Astrocyte of the cerebellum (primary cell): ENCODE measurements at regions of chr7 and their contacts with region 1.

Region 1: DNA sequence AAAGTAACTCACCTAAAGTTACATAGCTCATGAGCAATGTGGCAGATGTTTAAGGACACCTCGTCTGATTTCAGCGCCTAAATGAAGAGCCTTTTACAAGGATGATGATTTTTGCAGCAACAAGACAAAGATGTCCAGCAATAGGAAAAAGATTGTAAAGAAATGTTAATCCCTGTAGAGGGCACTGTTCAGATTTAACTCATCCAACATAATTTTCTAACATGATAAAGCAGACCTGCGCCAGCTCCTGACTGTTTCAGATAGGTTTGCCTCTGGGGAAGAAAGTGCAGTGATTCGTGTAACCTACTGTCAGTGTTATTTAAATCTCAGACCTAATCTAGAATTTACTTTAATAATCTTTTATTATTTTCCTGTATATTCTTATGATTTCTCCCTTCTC is 595.2 kb downstream of the AUTS2 start:
- DNase-seq: no peak
- H3K4me3 ChIP-seq: no peak overlapping the region
- CTCF ChIP-seq: peak; percentile 42

Region 2: GRCh38 chr7:70241536-70242175 is 48.1 kb after region 1 on chr7:
- in situ Hi-C with region 1: loop called (anchors 5 kb)
- DNase-seq: no peak
- H3K4me3 ChIP-seq: no peak overlapping the region
- CTCF ChIP-seq: no peak

Region 3: GRCh38 chr7:70259502-70259901 is 66.0 kb after region 1 on chr7:
- in situ Hi-C with region 1: no loop called
- DNase-seq: peak; percentile 19
- H3K4me3 ChIP-seq: no peak overlapping the region
- CTCF ChIP-seq: no peak

Region 4: DNA sequence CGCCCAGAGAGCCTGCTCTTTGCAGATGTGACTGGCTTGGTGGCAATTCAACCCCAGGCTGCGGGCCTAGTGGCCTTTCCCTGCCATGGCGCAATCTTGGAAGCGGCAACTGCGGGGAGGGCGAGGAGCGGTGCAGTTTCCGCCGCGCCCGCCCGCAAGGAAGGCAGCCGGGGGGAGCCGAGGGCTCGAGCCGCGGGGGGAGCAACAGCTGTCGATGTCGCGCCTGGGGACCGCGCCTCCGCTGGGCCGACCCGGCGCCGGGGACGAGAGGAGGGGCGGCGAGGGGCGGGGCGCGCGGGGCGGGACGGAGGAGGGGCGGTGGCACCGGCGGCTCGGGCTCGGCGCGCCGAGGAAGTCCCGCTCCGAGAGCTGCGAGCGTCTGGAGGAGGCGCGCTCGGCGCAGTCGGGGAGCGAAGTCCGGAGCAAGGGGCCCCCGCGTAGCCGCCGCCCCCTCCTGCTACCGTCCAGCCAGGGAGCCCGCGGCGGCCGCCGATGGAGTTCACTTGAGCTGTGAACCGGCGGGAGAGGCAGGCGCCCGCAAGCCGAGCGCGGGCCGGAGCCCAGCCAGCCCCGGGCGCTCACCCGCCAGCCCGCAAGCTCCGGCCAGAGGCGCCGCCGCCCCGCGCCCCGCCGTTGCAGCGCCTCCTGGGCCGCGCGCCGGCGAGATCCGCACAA is 500.3 kb after region 1 on chr7:
- in situ Hi-C with region 1: loop called (anchors 25 kb)
- DNase-seq: no peak
- H3K4me3 ChIP-seq: peak overlapping the region; percentile 93
- CTCF ChIP-seq: peak; percentile 22